ENCODE measurements at regions of chr4 and their contacts with region 1.

Region 1: DNA sequence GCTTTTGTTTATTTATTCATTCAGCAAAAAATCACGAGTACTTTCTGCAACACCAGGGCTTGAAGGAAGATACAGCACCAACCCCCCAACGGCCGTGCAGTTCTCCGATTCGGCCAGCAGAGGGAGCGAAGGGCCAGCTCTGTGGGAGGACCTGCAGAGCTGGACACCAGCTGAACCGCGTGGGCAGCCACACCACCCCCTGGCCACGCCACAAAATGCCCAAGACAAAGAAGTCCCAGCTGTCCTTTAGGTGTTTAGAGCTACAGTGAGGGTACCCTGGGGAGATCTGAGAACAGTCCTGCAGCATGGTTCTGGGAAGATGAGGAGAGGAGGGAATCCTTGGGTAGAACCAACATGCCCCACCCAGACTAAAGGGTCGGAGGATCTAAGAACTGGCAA is 83.1 kb downstream of the RELL1 start:
- DNase-seq: peak; percentile 26
- H3K4me3 ChIP-seq: no peak overlapping the region
- H3K27ac ChIP-seq: no peak overlapping the region
- H3K27me3 ChIP-seq: no peaks in the 10 kb centered on the region
- CTCF ChIP-seq: peak; percentile 99

Region 2: GRCh38 chr4:37615059-37615719 is 12.1 kb after region 1 on chr4:
- CTCF ChIA-PET with region 1: interaction called, 22 read pairs
- POLR2A ChIA-PET with region 1: no interaction called
- DNase-seq: no peak
- H3K4me3 ChIP-seq: no peak overlapping the region
- H3K27ac ChIP-seq: no peak overlapping the region
- H3K27me3 ChIP-seq: no peaks in the 10 kb centered on the region
- CTCF ChIP-seq: no peak

Region 3: GRCh38 chr4:37661772-37662171 is 58.7 kb after region 1 on chr4:
- CTCF ChIA-PET with region 1: interaction called, 11 read pairs
- POLR2A ChIA-PET with region 1: no interaction called
- DNase-seq: no peak
- H3K4me3 ChIP-seq: no peak overlapping the region
- H3K27ac ChIP-seq: peak overlapping the region; percentile 13
- H3K27me3 ChIP-seq: no peaks in the 10 kb centered on the region
- CTCF ChIP-seq: no peak

Region 4: GRCh38 chr4:37793562-37793961 is 190.5 kb after region 1 on chr4:
- CTCF ChIA-PET with region 1: interaction called, 23 read pairs
- POLR2A ChIA-PET with region 1: no interaction called
- DNase-seq: no peak
- H3K4me3 ChIP-seq: no peak overlapping the region
- H3K27ac ChIP-seq: no peak overlapping the region
- H3K27me3 ChIP-seq: peaks cover 17% of the 10 kb centered on the region
- CTCF ChIP-seq: peak; percentile 61

Region 5: GRCh38 chr4:37802068-37802666 is 199.1 kb after region 1 on chr4:
- CTCF ChIA-PET with region 1: interaction called, 48 read pairs
- POLR2A ChIA-PET with region 1: no interaction called
- DNase-seq: no peak
- H3K4me3 ChIP-seq: no peak overlapping the region
- H3K27ac ChIP-seq: no peak overlapping the region
- H3K27me3 ChIP-seq: peaks cover 5% of the 10 kb centered on the region
- CTCF ChIP-seq: peak; percentile 51

Region 6: GRCh38 chr4:37826295-37827029 is 223.4 kb after region 1 on chr4 and contains the start of gene PGM2:
- CTCF ChIA-PET with region 1: interaction called, 14 read pairs
- POLR2A ChIA-PET with region 1: no interaction called
- DNase-seq: no peak
- H3K4me3 ChIP-seq: peak within 1 kb of the TSS; percentile 88
- H3K27ac ChIP-seq: peak within 1 kb of the TSS; percentile 47
- H3K27me3 ChIP-seq: no peaks in the 10 kb centered on the region
- CTCF ChIP-seq: no peak
- polyA plus RNA-seq, gene PGM2: 17.6 and 24.1 TPM in 2 replicates

Region 7: DNA sequence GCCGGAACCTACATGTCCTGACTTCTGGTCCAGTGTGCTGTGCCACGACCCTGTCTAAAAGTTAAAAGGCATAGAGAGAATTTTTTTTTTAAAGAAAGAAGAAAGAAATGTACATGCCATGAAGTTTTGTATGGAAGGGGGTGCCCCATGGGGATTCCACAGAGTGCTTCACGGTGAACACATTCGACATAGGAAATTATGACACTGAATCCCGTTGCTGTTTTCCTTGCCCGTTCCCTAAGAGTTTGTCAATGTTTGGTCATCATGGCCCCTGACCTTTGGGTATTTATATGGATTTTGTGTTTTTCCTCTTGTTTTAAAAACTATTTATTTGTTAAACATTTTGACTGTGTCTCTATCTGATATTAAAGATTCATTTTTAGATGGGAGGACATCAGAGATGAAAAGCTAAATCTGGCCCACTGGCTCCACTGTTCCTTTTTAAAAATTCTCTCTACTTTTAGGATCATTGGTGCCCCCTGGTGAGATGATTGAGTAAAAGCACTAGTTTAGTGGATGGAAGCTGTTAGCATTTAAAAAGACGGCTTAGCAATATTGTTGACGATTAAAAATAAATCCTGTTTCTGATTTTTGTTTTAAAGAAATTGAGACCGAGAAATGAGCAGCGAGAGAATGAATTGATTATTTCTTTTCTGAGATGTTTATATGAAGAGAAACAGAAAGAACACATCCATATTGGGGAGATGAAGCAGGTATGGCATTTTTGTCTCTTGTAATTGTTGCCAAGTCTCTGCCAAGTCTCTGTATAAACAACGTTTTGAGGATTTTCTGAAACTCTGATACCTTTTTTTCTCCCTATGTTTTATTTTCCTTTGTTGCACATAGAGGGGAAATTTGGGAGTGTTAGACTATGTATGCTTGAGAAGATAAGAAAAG is 432.2 kb after region 1 on chr4:
- CTCF ChIA-PET with region 1: interaction called, 22 read pairs
- POLR2A ChIA-PET with region 1: no interaction called
- DNase-seq: peak; percentile 32
- H3K4me3 ChIP-seq: no peak overlapping the region
- H3K27ac ChIP-seq: no peak overlapping the region
- H3K27me3 ChIP-seq: no peaks in the 10 kb centered on the region
- CTCF ChIP-seq: peak; percentile 70

Measured in AG04450 (cell line).